ENCODE measurements at regions of chr1 and their contacts with region 1.

Region 1: DNA sequence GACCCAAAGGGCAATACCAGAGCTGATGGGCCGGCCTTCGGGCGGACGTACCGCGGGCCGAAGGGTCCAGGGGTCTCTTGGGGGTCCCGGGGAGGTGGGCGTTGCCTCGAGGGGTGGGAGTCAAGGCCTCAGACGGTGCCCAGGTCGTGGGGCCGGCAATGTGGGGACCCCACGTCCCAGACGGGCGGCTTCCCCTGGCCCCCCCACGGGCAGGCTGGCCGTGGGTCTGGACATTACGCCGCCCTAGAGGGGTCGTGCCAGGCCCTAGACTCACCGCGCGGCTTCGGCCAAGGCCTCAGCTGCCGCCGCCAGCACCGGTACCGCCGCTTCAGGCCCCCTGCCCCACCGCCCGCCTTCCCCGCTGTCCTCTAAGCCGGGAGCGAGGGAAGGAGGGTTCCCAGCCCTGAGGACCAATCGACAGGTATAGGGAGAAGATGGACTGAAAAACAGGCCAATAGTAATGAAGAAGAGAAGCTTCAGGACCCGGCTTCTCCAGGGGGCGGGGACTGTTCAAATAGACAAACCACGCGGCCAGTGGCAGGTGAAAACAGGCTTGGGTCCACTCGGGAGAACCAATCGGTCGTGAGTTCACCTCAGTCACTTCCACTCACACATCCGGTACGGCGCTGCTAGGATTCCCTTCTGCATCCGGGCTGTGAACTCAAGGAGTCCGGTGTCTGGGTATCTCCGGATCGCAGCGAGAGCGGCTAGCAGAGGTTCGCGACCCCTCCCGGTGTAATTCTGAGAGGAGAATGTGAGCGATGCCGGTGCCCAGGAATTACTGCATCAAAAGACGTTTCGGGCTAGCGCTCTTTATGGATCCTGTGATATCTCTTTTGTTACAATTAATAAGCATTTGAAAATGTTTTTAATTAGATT is at the start of gene MTOR:
- DNase-seq: peak; percentile 98
- ATAC-seq: peak; percentile 98
- H3K4me3 Mint-ChIP-seq: peak within 1 kb of the TSS; percentile 90
- H3K27ac Mint-ChIP-seq: peak within 1 kb of the TSS; percentile 87
- H3K4me1 Mint-ChIP-seq: peaks cover 15% of the 10 kb centered on the region
- H3K27me3 Mint-ChIP-seq: no peaks in the 10 kb centered on the region
- total RNA-seq, gene MTOR: 32.3 to 36.3 TPM

Region 2: GRCh38 chr1:10472220-10473144 is 789.9 kb before region 1 on chr1 and contains the start of gene DFFA:
- CTCF ChIA-PET with region 1: no interaction called
- POLR2A ChIA-PET with region 1: no interaction called
- intact Hi-C with region 1: loop called in 1 of 2 experiments (anchors 2 kb)
- DNase-seq: peak; percentile 96
- ATAC-seq: peak; percentile 83
- H3K4me3 Mint-ChIP-seq: peak within 1 kb of the TSS; percentile 97
- H3K27ac Mint-ChIP-seq: peak within 1 kb of the TSS; percentile 92
- H3K4me1 Mint-ChIP-seq: peaks cover 38% of the 10 kb centered on the region
- H3K27me3 Mint-ChIP-seq: no peaks in the 10 kb centered on the region
- total RNA-seq, gene DFFA: 45.7 to 46.4 TPM

Region 3: DNA sequence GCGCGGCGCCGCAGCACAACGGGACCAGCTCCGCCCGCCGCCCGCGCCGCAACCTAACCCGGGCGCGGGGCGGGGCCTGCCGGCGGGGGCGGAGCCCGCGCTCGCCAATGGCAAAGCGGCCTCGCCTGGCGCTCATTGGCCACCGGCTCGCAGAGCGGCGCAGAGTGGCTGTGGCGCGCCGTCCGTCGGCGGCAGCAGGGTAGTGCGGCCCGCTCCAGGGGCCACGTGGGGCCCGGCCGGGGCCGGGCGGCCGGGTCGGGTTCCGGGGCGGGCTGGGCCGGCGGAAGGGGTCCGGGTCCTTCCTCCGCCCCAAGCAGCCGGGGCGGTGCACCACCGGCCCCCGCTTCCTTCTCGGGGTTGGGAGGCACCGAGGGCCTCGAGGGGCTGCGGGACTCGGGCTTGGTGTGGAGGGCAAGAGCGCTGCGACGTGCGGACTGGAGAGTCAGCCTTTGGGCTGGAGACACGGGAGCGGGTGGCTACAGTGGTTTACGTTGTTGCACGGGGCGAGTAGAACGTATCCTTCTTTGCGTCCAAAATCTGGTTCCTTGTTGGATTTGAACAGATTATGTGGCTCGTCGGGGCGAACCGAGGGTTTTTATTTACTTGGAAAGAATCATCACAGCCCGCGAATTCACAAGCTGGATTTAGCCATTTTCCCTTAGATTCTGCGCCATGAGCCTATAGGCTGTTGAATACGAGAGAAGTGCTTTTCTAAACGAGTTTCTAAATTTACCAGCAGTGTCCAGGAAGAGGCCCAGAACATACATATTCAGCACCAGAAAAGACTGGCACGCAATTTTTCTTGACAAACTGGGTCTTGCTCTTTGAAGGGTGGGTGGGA is 202.2 kb before region 1 on chr1 and contains the start of gene SRM:
- CTCF ChIA-PET with region 1: no interaction called
- POLR2A ChIA-PET with region 1: no interaction called
- intact Hi-C with region 1: loop called in 1 of 2 experiments (anchors 1 kb)
- DNase-seq: peak; percentile 95
- ATAC-seq: peak; percentile 98
- H3K4me3 Mint-ChIP-seq: peak within 1 kb of the TSS; percentile 93
- H3K27ac Mint-ChIP-seq: peak within 1 kb of the TSS; percentile 94
- H3K4me1 Mint-ChIP-seq: peaks cover 41% of the 10 kb centered on the region
- H3K27me3 Mint-ChIP-seq: no peaks in the 10 kb centered on the region
- total RNA-seq, gene SRM: 180 to 242 TPM

Region 4: GRCh38 chr1:11272832-11273594 is 10.6 kb after region 1 on chr1 and contains the start of gene UBIAD1:
- CTCF ChIA-PET with region 1: interaction called, 13 read pairs
- POLR2A ChIA-PET with region 1: interaction called, 5 read pairs
- intact Hi-C with region 1: loop called (anchors 1 kb)
- DNase-seq: peak; percentile 95
- ATAC-seq: peak; percentile 84
- H3K4me3 Mint-ChIP-seq: peak within 1 kb of the TSS; percentile 95
- H3K27ac Mint-ChIP-seq: peak within 1 kb of the TSS; percentile 91
- H3K4me1 Mint-ChIP-seq: peaks cover 29% of the 10 kb centered on the region
- H3K27me3 Mint-ChIP-seq: no peaks in the 10 kb centered on the region
- total RNA-seq, gene UBIAD1: 29.2 to 32.0 TPM

Region 5: DNA sequence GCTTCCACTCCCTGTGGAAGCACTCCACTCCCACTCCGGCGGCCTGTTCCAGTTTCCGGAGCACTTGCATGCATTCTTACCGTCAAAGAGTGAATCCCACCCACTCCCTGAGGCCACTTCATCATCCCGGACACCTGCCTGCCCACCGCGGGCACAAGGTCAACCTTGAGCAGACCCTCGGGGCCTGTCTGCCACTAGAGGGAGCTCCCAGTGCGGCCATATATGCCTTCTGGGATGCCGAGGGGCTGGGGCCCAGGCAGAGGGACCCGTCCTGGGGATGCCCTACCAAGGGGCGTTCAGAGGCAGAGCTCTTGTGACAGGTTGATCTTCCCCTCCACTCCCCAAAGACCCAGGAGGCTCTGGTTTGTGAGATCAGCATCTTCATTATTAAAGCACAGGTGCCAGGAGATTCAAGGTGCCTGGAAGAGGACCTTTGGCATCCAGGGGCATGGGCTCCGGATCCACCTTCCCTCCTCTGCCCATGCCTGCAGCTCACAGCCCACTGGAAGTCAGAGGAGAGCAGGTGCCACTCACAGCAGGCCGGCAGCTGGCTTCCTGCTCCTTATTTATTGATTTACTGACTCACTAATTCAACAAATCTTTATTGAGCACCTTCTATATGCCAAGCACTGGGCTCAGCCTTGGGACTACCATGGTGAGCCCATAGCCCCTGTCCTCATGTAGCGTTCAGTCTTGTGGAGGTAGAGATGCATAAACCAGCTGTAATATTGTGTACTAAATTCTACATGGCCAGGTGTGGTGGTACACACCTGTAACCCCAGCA is 57.9 kb after region 1 on chr1:
- CTCF ChIA-PET with region 1: no interaction called
- POLR2A ChIA-PET with region 1: no interaction called
- intact Hi-C with region 1: no loop called
- DNase-seq: peak; percentile 63
- ATAC-seq: peak; percentile 57
- H3K4me3 Mint-ChIP-seq: no peak overlapping the region
- H3K27ac Mint-ChIP-seq: no peak overlapping the region
- H3K4me1 Mint-ChIP-seq: no peaks in the 10 kb centered on the region
- H3K27me3 Mint-ChIP-seq: no peaks in the 10 kb centered on the region

Region 6: DNA sequence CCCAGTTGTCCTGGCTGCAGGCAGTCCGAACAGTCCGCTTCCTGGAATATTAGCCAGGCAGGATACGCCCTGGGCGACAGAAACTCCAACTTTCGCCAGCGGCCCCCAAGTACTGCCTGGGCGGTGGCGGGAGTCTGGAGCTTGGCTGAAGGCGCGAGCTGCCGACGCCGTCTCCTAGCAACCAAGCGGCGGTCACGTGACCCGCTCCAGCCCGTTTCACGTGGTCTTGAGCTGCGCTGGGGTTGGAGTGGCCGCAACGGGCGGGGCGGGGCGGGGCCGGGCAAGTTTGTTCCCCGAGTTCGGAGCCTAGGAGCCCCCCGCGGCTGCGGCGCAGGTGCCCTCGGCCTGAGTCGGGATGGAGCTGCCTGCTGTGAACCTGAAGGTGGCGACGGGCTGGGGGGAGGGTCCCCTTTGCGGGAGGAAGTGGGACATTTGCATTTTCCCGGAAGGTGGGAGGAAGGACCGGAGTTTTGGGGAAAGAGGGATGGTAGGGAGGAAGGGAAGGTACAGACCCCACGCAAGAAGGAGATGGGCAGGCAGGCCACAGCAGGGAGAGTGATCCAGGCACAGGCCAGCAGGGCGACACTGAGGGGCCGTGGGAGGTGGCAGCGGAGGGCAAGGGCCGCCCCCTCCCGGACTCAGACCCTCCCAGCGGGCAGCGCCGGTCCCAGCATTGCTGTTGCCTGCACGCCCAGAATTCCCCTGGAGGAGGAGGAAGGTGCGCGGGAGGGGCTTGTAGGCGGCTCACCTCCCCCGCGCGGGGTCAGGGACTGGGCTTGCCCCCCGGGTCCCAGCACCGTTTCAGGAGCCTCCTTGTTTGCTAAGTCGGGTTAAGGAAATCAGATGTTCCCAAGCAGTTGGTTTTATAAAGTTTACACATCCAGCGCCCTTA is 473.7 kb after region 1 on chr1 and contains the start of gene AGTRAP:
- CTCF ChIA-PET with region 1: no interaction called
- POLR2A ChIA-PET with region 1: no interaction called
- intact Hi-C with region 1: loop called in 1 of 2 experiments (anchors 1 kb)
- DNase-seq: peak; percentile 95
- ATAC-seq: peak; percentile 81
- H3K4me3 Mint-ChIP-seq: peak within 1 kb of the TSS; percentile 87
- H3K27ac Mint-ChIP-seq: peak within 1 kb of the TSS; percentile 82
- H3K4me1 Mint-ChIP-seq: peaks cover 56% of the 10 kb centered on the region
- H3K27me3 Mint-ChIP-seq: no peaks in the 10 kb centered on the region
- total RNA-seq, gene AGTRAP: 13.2 to 13.3 TPM

Region 7: DNA sequence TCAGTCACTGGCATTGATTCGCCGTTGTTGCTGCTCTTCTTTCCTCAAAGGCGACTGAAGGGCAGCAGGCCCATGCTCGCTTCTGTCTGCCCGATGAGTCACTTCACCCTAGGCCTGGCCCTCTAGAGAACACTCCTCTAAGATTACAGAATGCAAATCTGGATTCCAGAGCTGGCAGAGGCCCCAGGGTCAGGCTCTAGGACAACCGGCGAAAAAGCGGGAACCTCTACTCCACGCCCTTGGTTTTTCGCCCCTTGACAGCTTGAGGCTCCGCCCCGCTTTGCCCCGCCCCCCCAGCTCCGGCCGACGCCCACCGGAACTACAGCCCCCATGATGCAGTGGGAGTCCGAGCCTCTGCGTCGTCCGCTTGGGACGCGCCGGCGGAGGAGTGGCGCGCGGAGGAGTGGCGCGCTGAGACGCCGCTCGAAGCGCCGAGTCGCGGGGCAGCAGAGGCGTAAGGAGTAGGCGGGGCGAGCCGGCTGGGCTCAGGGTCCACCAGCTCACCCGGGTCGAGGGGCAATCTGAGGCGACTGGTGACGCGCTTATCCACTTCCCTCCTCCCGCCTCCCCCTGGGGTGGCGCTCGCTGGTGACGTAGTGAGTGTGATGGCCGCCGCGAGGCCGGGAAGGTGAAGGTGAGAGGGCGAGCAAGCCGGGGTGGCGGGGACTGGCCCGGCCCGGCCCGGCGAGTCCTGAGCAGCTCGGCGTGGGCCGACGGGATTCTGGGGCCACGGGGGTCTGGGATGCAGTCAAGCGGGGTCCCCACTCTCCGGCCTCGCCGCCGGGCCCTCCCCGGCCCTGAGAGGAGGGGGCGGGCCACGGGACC is 717.7 kb after region 1 on chr1 and contains the start of gene MFN2:
- CTCF ChIA-PET with region 1: no interaction called
- POLR2A ChIA-PET with region 1: no interaction called
- intact Hi-C with region 1: loop called in 1 of 2 experiments (anchors 10 kb)
- DNase-seq: peak; percentile 96
- ATAC-seq: peak; percentile 93
- H3K4me3 Mint-ChIP-seq: peak within 1 kb of the TSS; percentile 97
- H3K27ac Mint-ChIP-seq: peak within 1 kb of the TSS; percentile 94
- H3K4me1 Mint-ChIP-seq: peaks cover 36% of the 10 kb centered on the region
- H3K27me3 Mint-ChIP-seq: no peaks in the 10 kb centered on the region
- total RNA-seq, gene MFN2: 52.5 to 71.6 TPM

Region 8: DNA sequence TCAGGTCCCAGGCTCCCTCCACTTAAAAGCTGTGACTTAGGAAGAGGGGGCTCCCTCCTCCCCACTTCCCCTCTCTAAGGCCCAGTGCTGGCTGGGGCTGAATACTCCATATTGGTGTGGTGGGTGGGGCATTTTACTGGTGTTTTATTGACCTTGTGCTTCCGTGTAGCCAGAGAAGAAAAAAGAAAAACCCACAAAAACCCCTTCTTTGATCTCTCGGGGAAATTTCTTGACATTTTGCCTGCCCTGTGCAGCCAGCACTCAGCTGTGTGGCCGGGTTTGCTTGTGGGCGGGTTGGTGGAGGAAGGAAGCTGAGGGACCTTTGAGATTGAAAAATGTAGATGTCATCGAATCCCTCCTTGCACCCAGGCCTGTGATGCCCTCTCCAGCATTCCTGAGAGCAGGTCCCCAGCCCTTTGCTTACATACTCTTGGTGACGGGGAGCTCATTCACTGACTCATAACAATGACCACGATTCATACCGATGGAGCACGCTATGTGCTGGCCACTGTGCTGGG is 825.4 kb after region 1 on chr1:
- CTCF ChIA-PET with region 1: no interaction called
- POLR2A ChIA-PET with region 1: no interaction called
- intact Hi-C with region 1: no loop called
- DNase-seq: peak; percentile 72
- ATAC-seq: peak; percentile 62
- H3K4me3 Mint-ChIP-seq: peak overlapping the region; percentile 9
- H3K27ac Mint-ChIP-seq: peak overlapping the region; percentile 72
- H3K4me1 Mint-ChIP-seq: peaks cover 41% of the 10 kb centered on the region
- H3K27me3 Mint-ChIP-seq: no peaks in the 10 kb centered on the region

Measured in activated CD4-positive, alpha-beta T cell treated with anti-CD3 and anti-CD28 coated beads for 36 hours (primary cell).